K562 (cell line): ENCODE measurements at regions of chr1 and their contacts with region 1.

Region 1: DNA sequence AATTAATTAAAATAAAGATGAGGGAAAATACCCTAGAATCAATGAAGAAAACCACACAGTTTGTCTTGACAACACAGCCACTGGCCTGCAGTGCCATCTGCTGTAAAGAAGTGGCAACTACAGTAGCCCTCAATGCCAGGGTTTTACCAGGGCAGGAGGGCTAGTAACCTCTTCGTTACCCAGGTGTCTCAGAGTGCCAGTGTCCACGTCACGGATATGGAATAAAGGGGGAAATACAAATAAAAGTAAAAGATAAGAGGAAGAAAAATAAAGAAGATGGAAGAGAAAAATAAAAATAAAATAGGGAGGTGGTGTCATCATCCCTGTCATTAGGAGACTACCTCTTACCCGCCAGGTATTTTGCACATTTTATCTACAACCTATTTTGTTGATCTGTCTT is 14.2 kb upstream of the SLC44A3 start:
- DNase-seq: peak; percentile 50 to 65 (median 58)
- ATAC-seq: peak; percentile 72
- H3K4me3 ChIP-seq: no peak overlapping the region
- H3K27ac ChIP-seq: no peak overlapping the region
- H3K4me1 ChIP-seq: peaks cover 3% of the 10 kb centered on the region in 2 experiments; a peak in 4 of 5 replicates
- H3K27me3 ChIP-seq: no peaks in the 10 kb centered on the region
- CTCF ChIP-seq: peak; percentile 83 to 88 (median 88)
- EP300 ChIP-seq: no peak
- POLR2A ChIP-seq: no peak
- RAD21 ChIP-seq: peak; percentile 90 to 91

Region 2: GRCh38 chr1:94061513-94062443 is 744.1 kb before region 1 on chr1:
- CTCF ChIA-PET with region 1: interaction called, 3 read pairs
- POLR2A ChIA-PET with region 1: no interaction called
- in situ Hi-C with region 1: loop called (anchors 10 kb)
- intact Hi-C with region 1: loop called (anchors 1 kb)
- DNase-seq: peak; percentile 55 to 77 (median 73)
- ATAC-seq: peak; percentile 98
- H3K4me3 ChIP-seq: no peak overlapping the region
- H3K27ac ChIP-seq: no peak overlapping the region
- H3K4me1 ChIP-seq: no peaks in the 10 kb centered on the region
- H3K27me3 ChIP-seq: peaks cover 0 to 6% of the 10 kb centered on the region in 2 experiments; a peak in 2 of 5 replicates
- CTCF ChIP-seq: peak; percentile 79 to 80 (median 79)
- EP300 ChIP-seq: no peak
- POLR2A ChIP-seq: no peak
- RAD21 ChIP-seq: peak; percentile 76 to 89

Region 3: DNA sequence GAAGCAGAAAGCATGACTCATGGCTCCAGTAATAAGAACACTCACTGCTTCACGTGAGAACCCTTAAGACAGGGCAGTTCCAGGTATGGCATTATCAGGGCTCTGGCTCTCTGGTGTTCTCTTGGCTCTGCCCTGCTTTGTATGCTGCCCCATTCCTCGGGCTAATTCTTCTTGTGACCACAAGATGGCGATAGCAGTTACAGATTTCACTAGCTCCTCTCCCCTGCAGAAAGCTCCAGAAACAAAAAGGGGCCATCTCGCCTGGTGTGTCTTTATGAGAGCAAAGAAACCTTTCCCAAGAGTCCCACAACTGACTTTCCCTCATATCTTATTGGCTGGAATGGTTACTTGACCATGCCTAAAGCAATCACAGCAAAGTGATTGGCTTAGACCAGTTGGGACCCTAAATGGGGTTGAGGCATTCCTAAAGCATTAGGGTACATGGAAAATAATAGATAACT is 324.4 kb before region 1 on chr1:
- CTCF ChIA-PET with region 1: interaction called, 25 read pairs
- POLR2A ChIA-PET with region 1: interaction called, 5 read pairs
- in situ Hi-C with region 1: no loop called
- intact Hi-C with region 1: loop called (anchors 1 kb)
- DNase-seq: peak; percentile 52 to 65 (median 59)
- ATAC-seq: peak; percentile 96
- H3K4me3 ChIP-seq: no peak overlapping the region
- H3K27ac ChIP-seq: no peak overlapping the region
- H3K4me1 ChIP-seq: no peaks in the 10 kb centered on the region
- H3K27me3 ChIP-seq: no peaks in the 10 kb centered on the region
- CTCF ChIP-seq: peak; percentile 68 to 71 (median 68)
- EP300 ChIP-seq: no peak
- POLR2A ChIP-seq: no peak
- RAD21 ChIP-seq: peak; percentile 54 to 65

Region 4: GRCh38 chr1:94522304-94522703 is 283.6 kb before region 1 on chr1:
- CTCF ChIA-PET with region 1: interaction called, 19 read pairs
- POLR2A ChIA-PET with region 1: no interaction called
- in situ Hi-C with region 1: loop called (anchors 5 kb)
- intact Hi-C with region 1: loop called (anchors 1 kb)
- DNase-seq: peak in 1 of 4 experiments; percentile 43
- ATAC-seq: peak; percentile 67; the same call in 2 of the 3 replicates
- H3K4me3 ChIP-seq: no peak overlapping the region
- H3K27ac ChIP-seq: no peak overlapping the region
- H3K4me1 ChIP-seq: no peaks in the 10 kb centered on the region
- H3K27me3 ChIP-seq: no peaks in the 10 kb centered on the region
- CTCF ChIP-seq: peak; percentile 43 to 62 (median 49); a peak in 5 of 6 replicates
- EP300 ChIP-seq: no peak
- POLR2A ChIP-seq: no peak
- RAD21 ChIP-seq: peak; percentile 80 to 82

Region 5: DNA sequence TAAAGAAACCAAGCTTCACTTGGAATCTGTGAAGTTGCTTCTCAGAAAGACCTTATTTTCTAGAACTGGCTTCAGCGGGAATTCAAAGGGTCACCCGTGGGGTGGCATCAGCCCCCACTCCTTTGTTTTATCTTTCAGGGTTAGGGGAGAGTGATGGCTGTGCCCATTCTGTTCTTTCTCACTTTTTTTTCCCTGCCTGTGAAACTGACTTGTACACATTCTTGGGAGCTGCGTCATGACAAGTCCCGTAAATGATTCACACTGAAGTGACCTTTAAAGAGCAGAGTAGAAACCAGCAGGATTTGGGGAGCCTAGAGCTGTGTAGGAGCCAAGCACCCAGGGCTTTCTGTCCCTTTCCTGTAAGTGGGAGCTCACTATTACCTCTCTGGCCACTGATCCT is 58.0 kb after region 1 on chr1:
- CTCF ChIA-PET with region 1: no interaction called
- POLR2A ChIA-PET with region 1: no interaction called
- in situ Hi-C with region 1: no loop called
- intact Hi-C with region 1: no loop called
- DNase-seq: no peak
- ATAC-seq: no peak
- H3K4me3 ChIP-seq: no peak overlapping the region
- H3K27ac ChIP-seq: no peak overlapping the region
- H3K4me1 ChIP-seq: no peaks in the 10 kb centered on the region
- H3K27me3 ChIP-seq: peaks cover 12% of the 10 kb centered on the region in 2 experiments
- CTCF ChIP-seq: no peak
- EP300 ChIP-seq: no peak
- POLR2A ChIP-seq: no peak
- RAD21 ChIP-seq: no peak

Region 6: DNA sequence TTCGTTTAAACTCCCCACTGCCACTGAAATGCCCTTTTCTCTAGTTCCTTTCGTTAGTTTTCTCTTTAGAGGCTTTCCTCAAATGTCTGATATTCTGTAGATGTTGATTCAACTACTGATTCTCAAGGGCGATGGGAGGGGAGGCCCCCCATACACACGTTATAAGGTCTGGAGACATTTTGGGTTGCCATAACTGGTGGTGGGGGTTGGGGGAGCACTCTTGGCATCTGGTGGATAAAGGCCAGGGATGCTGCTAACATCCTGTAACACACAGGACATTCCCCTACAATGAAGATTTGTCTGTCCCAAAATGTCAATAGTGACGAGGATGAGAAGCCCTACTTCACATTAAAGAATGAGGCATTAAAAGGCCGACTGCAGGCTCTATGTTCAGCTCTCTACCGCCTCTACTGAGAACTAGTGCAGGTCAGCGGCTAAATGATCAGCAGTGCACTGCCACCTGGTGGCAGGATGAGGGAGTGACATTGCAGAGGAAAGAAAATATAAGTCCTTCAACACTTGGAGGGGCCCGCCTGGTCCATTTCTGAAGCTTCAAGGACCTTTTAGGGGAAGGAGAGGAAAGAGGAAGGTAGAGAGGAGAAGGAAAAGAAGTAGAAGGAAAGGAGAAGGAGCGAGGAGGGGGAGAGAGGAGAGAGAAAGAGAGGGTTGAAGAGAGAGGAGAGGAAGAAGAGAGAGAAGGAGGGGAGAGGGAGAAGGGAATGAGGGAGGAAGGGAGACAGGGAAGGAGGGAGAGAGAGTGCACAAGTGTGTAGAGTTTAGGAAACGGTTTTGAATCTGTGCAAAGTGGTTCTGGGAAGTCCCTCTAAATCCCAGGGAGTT is 237.4 kb after region 1 on chr1:
- CTCF ChIA-PET with region 1: no interaction called
- POLR2A ChIA-PET with region 1: no interaction called
- in situ Hi-C with region 1: no loop called
- intact Hi-C with region 1: loop called (anchors 5 kb)
- DNase-seq: peak; percentile 77 to 88 (median 81)
- ATAC-seq: peak; percentile 95
- H3K4me3 ChIP-seq: no peak overlapping the region
- H3K27ac ChIP-seq: no peak overlapping the region
- H3K4me1 ChIP-seq: no peaks in the 10 kb centered on the region; a peak in 1 of 5 replicates
- H3K27me3 ChIP-seq: no peaks in the 10 kb centered on the region
- CTCF ChIP-seq: peak; percentile 99 to 100 (median 100)
- EP300 ChIP-seq: no peak
- POLR2A ChIP-seq: no peak
- RAD21 ChIP-seq: peak; percentile 82 to 95